ENCODE measurements at regions of chr12 and their contacts with region 1.

Region 1: DNA sequence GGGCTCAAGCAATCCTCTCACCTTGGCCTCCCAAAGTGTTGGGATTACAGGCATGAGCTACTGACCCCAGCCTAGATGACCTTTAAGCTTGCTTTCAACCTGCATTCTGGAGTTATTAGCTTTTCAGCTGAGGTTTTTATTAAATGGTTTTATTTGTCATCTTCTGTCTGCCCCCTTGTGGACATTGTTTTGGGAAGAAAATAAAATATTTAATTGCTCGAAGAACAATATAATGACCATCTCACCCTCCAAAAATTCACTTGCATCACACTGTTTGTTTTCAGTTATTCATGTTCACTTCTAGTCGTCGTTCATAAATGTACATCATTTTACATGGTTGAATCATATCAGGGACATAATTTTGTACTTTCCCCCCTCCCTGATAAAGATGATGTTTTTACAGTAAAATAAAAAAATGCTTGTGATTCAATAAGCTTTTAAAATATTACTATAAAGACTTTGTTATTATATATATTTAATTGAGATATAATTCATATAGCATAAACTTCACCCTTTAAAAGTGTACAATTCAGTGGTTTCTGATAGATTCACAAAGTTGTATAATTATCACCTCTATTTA is 10.1 kb upstream of the SPATS2 start:
- DNase-seq: no peak
- ATAC-seq: no peak

Region 2: GRCh38 chr12:49403971-49404450 is 46.8 kb after region 1 on chr12:
- intact Hi-C with region 1: no loop called
- DNase-seq: no peak
- ATAC-seq: no peak

Region 3: GRCh38 chr12:49515266-49515665 is 158.1 kb after region 1 on chr12:
- intact Hi-C with region 1: loop called (anchors 1 to 2 kb)
- DNase-seq: no peak
- ATAC-seq: no peak